Activated naive CD4-positive, alpha-beta T cell treated with anti-CD3 and anti-CD28 coated beads for 36 hours (primary cell): ENCODE measurements at regions of chr18 and their contacts with region 1.

Region 1: DNA sequence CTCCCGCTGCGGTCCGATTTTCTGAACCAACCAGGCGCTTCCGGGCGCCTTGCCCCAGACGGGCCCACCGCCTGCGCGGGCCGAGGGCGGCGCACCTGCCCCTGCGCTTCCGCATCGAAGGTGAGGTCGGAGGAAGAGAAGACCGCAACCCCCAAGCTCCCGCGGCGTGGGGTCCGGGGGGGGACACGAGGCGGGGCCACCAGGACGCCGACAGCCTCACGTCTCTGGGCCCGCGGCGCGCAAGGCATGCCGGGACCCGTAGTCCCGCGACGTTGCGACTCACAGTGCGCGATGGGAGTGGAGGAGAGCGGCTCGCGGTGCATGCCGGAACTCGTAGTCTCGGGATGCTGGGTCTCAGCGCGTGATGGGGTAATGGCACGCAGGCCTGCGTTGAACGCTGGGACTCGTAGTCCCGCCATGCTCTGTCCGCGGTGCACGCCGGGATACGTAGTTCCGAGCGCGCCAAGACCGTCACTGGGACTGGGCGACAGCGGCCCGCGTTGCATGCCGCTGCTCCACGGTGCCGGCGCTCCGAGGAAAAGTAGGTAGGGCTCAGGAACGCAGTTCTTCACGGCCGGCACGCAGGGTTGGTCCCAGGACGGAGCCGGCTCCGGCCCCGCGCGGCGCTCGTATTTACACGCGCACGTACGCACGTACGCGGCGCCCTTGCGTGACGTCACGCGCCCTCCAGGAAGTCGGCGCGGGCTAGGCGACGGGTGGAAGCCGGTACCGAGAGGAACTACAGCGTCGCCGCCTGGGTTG is at the start of gene CTDP1:
- DNase-seq: peak; percentile 98
- H3K4me3 Mint-ChIP-seq: peak within 1 kb of the TSS; percentile 93
- H3K27ac Mint-ChIP-seq: peak within 1 kb of the TSS; percentile 98
- H3K4me1 Mint-ChIP-seq: peaks cover 64% of the 10 kb centered on the region
- H3K27me3 Mint-ChIP-seq: no peaks in the 10 kb centered on the region
- total RNA-seq, gene CTDP1: 28.0 to 29.1 TPM

Region 2: DNA sequence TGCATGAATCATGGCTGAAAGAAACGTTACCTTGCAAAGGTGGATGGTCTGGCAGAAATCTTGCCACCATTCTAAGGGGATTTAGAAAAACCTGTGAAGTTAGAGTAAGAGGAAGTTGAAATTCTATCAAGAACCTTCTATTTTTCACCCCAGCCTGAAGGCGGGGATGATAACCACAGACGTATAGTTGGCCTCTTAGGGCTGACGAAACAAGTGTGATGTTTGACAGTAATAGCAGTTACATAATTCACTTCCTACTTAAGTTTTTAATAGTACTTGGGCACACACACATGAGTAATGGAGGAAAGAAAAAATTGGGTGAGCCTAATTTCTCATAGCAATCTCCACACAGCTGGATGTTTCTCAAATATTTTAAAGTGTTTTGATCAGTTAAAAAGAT is 1036.3 kb before region 1 on chr18:
- CTCF ChIA-PET with region 1: no interaction called
- intact Hi-C with region 1: loop called (anchors 5 kb)
- DNase-seq: no peak
- H3K4me3 Mint-ChIP-seq: no peak overlapping the region
- H3K27ac Mint-ChIP-seq: peak overlapping the region; percentile 16
- H3K4me1 Mint-ChIP-seq: peaks cover 5% of the 10 kb centered on the region
- H3K27me3 Mint-ChIP-seq: no peaks in the 10 kb centered on the region

Region 3: DNA sequence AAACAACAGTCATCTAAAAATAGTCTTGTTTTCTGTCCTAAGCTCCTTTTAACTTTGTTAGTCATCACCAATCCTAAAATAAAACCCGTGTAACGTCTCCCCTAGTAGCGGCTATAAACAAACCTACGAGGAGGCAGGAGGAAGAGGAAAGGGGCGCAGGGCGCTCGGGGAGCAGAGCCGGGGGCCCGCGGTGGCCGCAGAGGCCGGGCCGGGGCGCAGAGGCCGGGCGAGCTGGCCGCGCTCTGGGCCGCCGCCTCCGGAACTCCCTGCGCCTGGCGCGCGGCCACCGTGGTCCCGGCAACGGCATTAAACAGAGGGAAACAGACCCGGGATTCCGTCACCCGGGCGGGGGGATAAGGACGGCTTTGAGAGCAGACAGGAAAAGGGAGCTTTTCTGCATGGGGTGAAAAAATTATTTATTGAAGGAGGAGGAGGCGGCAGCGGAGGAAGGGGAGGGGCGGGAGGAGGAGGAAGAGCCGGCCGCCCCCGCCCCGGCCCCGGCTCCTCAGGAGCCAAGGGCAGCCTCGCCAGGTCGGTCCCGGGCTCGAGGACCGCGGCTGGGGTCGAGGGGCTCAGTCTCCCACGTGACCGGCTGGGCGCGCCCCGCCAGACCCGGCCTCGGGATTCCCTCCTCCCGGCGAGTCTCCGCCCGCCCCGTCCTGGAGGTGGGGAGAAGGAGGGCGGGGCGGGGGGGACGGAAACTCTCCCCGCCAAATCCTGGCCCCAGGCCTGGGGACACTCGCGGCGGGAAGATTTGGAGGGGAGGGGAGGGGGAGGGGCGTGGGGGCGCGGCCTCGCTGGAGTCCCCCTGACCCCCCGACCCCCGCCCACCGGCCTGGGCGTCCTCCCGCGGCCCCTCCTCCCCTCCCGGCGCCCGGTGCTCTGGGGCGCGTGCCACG is 285.4 kb before region 1 on chr18:
- CTCF ChIA-PET with region 1: no interaction called
- intact Hi-C with region 1: loop called (anchors 1 kb)
- DNase-seq: peak; percentile 73
- H3K4me3 Mint-ChIP-seq: peak overlapping the region; percentile 74
- H3K27ac Mint-ChIP-seq: peak overlapping the region; percentile 71
- H3K4me1 Mint-ChIP-seq: peaks cover 34% of the 10 kb centered on the region
- H3K27me3 Mint-ChIP-seq: peaks cover 5% of the 10 kb centered on the region

Region 4: GRCh38 chr18:79693561-79694205 is 14.4 kb after region 1 on chr18:
- CTCF ChIA-PET with region 1: no interaction called
- intact Hi-C with region 1: no loop called
- DNase-seq: no peak
- H3K4me3 Mint-ChIP-seq: no peak overlapping the region
- H3K27ac Mint-ChIP-seq: peak overlapping the region; percentile 46
- H3K4me1 Mint-ChIP-seq: peaks cover 26% of the 10 kb centered on the region
- H3K27me3 Mint-ChIP-seq: no peaks in the 10 kb centered on the region

Region 5: DNA sequence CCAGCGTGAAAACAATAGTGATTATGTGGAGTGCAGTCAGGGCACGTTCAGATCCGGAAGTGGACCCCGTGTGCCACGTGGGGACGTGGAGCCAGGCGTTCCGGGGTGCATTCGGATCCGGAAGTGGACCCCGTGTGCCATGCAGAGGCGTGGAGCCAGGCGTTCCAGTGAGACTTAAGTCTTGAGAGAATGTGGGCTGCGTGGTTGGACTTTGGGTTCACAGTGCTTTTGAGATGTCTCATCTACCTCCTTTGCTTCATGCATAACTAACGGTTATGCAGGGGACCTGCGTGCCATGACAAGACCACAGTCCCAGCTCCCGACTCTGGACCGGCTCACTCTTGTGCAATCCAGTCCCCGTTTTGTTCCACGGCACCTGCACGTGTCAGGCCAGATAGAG is 29.1 kb after region 1 on chr18:
- CTCF ChIA-PET with region 1: no interaction called
- intact Hi-C with region 1: no loop called
- DNase-seq: no peak
- H3K4me3 Mint-ChIP-seq: no peak overlapping the region
- H3K27ac Mint-ChIP-seq: no peak overlapping the region
- H3K4me1 Mint-ChIP-seq: no peaks in the 10 kb centered on the region
- H3K27me3 Mint-ChIP-seq: no peaks in the 10 kb centered on the region

Region 6: DNA sequence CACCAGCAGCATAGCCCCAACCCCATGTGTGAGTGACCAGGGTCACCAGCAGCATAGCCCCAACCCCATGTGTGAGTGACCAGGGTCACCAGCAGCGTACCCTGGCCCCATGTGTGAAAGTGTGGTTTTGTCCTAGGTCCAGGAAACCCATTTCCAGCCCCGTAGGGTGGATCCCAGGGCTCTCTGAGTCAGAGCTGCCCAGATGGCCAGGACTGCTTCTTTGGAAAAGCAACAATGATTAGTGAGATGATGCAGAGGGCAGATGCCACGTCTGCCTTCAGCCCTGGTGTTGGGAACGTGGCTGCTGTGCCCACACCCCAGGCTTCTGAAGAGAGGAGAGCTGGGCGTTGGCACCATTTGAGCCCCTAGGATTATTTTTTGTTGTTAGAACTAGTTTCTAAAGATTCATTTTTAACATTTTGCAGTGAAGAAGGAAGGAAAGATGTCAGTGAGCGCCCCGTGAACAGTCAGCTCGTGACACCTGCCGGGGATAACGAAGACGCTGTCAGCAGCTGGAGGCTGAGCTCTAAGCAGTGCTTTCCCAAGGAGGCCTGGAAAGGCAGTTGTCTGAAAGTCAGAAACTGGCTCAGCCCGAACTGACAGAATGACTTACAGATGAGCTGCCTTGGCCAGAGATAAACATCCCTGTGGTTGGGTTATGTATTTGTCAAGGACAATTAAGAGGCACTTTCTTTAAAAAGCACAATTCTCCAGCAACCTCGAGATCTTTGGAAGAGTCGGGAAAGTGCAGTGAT is 86.4 kb after region 1 on chr18:
- CTCF ChIA-PET with region 1: no interaction called
- intact Hi-C with region 1: no loop called
- DNase-seq: no peak
- H3K4me3 Mint-ChIP-seq: no peak overlapping the region
- H3K27ac Mint-ChIP-seq: no peak overlapping the region
- H3K4me1 Mint-ChIP-seq: no peaks in the 10 kb centered on the region
- H3K27me3 Mint-ChIP-seq: peaks cover 22% of the 10 kb centered on the region

Region 7: GRCh38 chr18:79797518-79798345 is 118.4 kb after region 1 on chr18 and contains the start of gene KCNG2:
- CTCF ChIA-PET with region 1: no interaction called
- intact Hi-C with region 1: loop called (anchors 5 kb)
- DNase-seq: peak; percentile 51
- H3K4me3 Mint-ChIP-seq: peak within 1 kb of the TSS; percentile 43
- H3K27ac Mint-ChIP-seq: no peak within 1 kb of the TSS
- H3K4me1 Mint-ChIP-seq: peaks cover 10% of the 10 kb centered on the region
- H3K27me3 Mint-ChIP-seq: peaks cover 38% of the 10 kb centered on the region
- total RNA-seq, gene KCNG2: not detected

Region 8: GRCh38 chr18:79988451-79989194 is 309.3 kb after region 1 on chr18 and contains the start of gene TXNL4A:
- CTCF ChIA-PET with region 1: no interaction called
- intact Hi-C with region 1: loop called (anchors 1 kb)
- DNase-seq: peak; percentile 84
- H3K4me3 Mint-ChIP-seq: peak within 1 kb of the TSS; percentile 85
- H3K27ac Mint-ChIP-seq: peak within 1 kb of the TSS; percentile 85
- H3K4me1 Mint-ChIP-seq: peaks cover 35% of the 10 kb centered on the region
- H3K27me3 Mint-ChIP-seq: no peaks in the 10 kb centered on the region
- total RNA-seq, gene TXNL4A: 185 to 186 TPM

Region 9: DNA sequence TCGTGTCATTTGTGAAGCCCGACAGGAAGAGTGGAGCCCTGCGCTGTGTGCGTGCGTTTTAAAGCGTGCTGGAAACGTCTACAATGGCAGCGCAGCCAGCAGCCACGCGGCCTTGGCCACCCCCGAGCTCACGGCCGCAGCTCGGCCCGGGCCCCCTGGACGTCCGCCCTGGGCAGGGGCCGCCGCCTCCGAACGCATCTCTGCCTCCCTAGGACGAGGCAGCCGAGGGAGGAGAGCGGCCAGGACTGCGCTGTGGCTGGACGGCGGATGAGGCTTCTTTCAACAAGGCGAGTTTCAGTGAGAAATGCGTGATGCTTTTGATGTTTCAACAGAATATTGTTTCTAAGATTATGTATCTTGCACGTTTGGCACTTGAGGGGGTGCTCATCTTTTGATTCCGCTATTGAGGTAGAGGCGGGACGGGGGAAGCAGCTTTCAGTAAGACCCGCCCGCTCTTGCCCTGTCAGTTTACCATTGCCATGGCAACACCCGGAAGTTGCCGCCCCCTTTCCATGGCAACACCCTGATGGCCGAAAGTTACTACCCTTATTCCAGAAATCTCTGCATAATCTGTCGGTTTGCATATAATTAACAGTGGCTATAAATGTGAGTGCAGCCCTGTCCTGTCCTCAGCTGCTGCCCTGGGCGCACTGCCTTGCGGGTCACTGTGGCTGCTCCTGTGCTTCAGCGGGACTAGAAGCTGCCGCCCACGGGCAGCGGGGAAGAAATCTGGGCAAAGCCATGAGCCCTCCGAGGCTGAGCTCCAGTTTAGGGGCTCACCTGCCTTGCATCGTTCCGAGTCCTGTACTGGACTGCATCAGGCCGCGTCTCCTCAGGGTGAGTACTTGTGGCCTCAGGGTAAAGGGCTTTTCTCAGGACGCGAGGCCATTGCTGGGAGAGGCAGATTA is 468.4 kb after region 1 on chr18:
- CTCF ChIA-PET with region 1: no interaction called
- intact Hi-C with region 1: loop called (anchors 5 kb)
- DNase-seq: peak; percentile 90
- H3K4me3 Mint-ChIP-seq: peak overlapping the region; percentile 82
- H3K27ac Mint-ChIP-seq: no peak overlapping the region
- H3K4me1 Mint-ChIP-seq: peaks cover 10% of the 10 kb centered on the region
- H3K27me3 Mint-ChIP-seq: peaks cover 24% of the 10 kb centered on the region